ENCODE measurements at regions of chr3 and their contacts with region 1.

Region 1: DNA sequence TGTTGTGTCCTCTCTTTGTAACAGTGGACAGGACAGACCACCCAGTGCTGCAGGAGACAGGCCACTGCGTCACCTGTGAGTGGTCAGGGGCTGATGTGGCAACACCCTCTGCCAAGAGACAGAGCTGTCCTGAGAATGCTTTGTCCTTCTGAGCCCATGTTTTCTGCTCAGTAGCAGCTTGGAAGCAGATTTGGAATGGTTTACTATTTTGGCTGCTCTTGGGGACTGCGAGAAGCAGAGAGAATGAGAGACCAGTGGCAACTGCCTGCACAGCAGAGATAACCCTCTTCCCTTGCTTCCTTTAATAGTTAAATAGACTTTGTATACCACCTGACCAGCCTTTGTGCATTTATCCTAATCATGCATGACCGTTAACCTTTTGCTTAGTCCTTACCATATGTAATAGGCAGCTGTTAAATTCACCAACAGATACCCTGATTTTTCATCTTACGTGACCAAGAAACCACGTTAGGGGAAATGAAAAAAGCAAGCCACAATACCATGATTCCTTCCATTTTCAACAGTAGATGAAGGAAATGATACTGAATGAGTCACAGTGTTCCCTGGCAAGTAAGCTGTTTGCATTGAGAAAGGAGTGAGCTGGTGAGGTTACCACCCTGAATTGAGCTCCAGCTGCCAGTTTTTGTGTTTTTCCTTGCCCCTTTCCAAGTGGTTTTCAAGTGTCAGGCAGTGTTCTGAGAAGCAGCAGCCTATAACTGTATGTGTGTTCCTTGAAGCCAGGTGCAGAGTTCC is 35.5 kb downstream of the B3GALNT1 start:
- DNase-seq: no peak
- H3K4me3 Mint-ChIP-seq: no peak overlapping the region
- H3K27ac Mint-ChIP-seq: no peak overlapping the region
- H3K4me1 Mint-ChIP-seq: peaks cover 41% of the 10 kb centered on the region
- H3K27me3 Mint-ChIP-seq: no peaks in the 10 kb centered on the region

Region 2: GRCh38 chr3:160801386-160802118 is 268.1 kb before region 1 on chr3:
- intact Hi-C with region 1: loop called (anchors 10 kb)
- DNase-seq: peak; percentile 90
- H3K4me3 Mint-ChIP-seq: peak overlapping the region; percentile 71
- H3K27ac Mint-ChIP-seq: peak overlapping the region; percentile 84
- H3K4me1 Mint-ChIP-seq: peaks cover 19% of the 10 kb centered on the region
- H3K27me3 Mint-ChIP-seq: peaks cover 4% of the 10 kb centered on the region

Region 3: GRCh38 chr3:161035711-161036110 is 34.0 kb before region 1 on chr3:
- intact Hi-C with region 1: loop called (anchors 2 kb)
- DNase-seq: no peak
- H3K4me3 Mint-ChIP-seq: no peak overlapping the region
- H3K27ac Mint-ChIP-seq: no peak overlapping the region
- H3K4me1 Mint-ChIP-seq: peaks cover 7% of the 10 kb centered on the region
- H3K27me3 Mint-ChIP-seq: no peaks in the 10 kb centered on the region

Region 4: DNA sequence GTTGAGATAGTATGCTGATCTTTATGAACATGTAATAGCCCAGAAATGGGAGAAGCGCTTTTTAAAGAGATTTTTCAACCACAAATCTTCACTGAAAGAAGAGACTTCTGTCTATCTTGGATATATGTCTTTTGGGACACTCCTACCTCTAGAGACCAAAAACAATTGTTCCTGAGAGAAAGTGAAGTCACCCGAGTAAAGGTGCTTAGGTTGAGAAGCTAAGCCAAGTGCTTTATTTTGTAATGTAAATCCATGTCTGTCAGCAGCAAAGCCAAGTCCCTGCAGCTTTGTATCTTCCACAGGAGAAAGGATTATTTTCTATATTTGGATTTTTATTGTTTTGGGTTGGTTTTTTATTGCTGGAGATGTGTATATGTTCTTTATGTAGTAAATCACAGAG is 67.6 kb after region 1 on chr3:
- intact Hi-C with region 1: no loop called
- DNase-seq: no peak
- H3K4me3 Mint-ChIP-seq: no peak overlapping the region
- H3K27ac Mint-ChIP-seq: no peak overlapping the region
- H3K4me1 Mint-ChIP-seq: no peaks in the 10 kb centered on the region
- H3K27me3 Mint-ChIP-seq: no peaks in the 10 kb centered on the region